ENCODE measurements at regions of chr5 and their contacts with region 1.

Region 1: DNA sequence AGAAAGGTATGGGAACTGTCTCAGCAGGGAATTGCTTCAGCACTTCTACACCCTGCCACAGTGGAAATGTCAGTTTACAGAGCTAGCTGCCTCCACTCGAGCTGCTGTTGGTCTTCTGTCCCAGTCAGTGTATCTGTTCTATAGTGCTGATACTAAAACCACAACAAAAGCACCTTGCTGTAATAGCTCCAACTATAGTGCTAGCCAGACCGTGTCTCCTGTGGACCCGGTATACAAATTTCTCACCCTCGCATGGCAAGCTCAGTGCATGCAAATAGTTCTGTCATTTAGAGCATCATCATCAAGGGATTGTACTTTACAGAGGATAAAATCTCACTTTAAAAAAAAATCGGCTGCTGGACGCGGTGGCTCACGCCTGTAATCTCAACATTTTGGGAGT is 51.5 kb upstream of the IQGAP2 start:
- DNase-seq: peak; percentile 87
- ATAC-seq: peak; percentile 100
- H3K4me3 ChIP-seq: no peak overlapping the region; the same call in 1 of the 2 replicates
- H3K27ac ChIP-seq: peak overlapping the region; percentile 15; the same call in 1 of the 2 replicates
- H3K4me1 ChIP-seq: peaks cover 10% of the 10 kb centered on the region
- H3K27me3 ChIP-seq: no peaks in the 10 kb centered on the region
- CTCF ChIP-seq: no peak
- EP300 ChIP-seq: peak; percentile 38 to 61; a peak in 2 of 4 replicates
- POLR2A ChIP-seq: no peak
- RAD21 ChIP-seq: no peak

Region 2: GRCh38 chr5:76386360-76386759 is 34.8 kb after region 1 on chr5:
- CTCF ChIA-PET with region 1: no interaction called
- POLR2A ChIA-PET with region 1: no interaction called
- RAD21 ChIA-PET with region 1: no interaction called
- SMC1A ChIA-PET with region 1: interaction called, 3 read pairs
- in situ Hi-C with region 1: no loop called
- intact Hi-C with region 1: loop called (anchors 5 kb)
- DNase-seq: no peak
- ATAC-seq: no peak
- H3K4me3 ChIP-seq: no peak overlapping the region
- H3K27ac ChIP-seq: no peak overlapping the region
- H3K4me1 ChIP-seq: no peaks in the 10 kb centered on the region
- H3K27me3 ChIP-seq: no peaks in the 10 kb centered on the region
- CTCF ChIP-seq: no peak
- EP300 ChIP-seq: no peak
- POLR2A ChIP-seq: no peak
- RAD21 ChIP-seq: no peak